HEK293T (cell line): ENCODE measurements at regions of chr17 and their contacts with region 1.

Region 1: GRCh38 chr17:49021095-49021767 is 24.0 kb downstream of the IGF2BP1 start:
- DNase-seq: no peak

Region 2: DNA sequence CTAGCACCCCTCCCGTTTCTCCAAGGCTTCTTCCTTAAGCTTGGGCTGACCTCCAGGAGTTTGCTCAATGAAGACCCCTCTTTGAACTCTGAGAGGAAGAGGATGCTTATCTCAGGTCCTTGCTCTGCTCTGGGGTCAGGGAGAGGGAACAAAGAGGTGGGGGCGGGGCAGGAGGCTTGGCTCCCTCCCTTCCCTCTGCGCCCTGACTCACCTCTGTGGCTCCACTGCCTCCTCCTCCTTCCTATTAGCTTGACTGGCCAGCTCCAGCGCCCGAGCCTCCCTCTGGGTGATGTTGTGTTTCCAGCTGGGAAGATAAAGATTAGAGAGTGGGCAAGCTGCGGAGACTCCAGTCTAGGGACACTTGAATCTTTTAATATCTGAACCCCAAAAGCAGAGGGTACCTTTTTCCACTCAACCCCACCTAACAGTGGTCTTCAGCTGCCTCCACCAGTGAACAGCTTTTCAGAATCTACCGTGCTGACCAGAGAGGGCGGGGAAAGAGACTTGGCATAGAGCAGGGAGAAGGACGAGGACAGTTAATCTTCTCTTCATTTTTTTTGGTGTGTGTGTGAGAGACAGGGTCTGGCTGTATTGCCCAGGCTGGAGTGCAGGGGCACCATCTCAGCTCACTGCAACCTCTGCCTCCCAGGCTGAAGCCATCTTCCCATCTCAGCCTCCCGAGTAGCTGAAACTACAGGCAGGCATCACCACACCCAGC is 59.6 kb before region 1 on chr17:
- CTCF ChIA-PET with region 1: no interaction called
- POLR2A ChIA-PET with region 1: no interaction called
- DNase-seq: no peak

Region 3: GRCh38 chr17:49031965-49032928 is 11.0 kb after region 1 on chr17:
- CTCF ChIA-PET with region 1: interaction called, 15 read pairs
- POLR2A ChIA-PET with region 1: no interaction called
- DNase-seq: peak; percentile 89

Region 4: GRCh38 chr17:49101054-49101947 is 80.1 kb after region 1 on chr17:
- CTCF ChIA-PET with region 1: no interaction called
- POLR2A ChIA-PET with region 1: no interaction called
- DNase-seq: no peak